AG04450 (cell line): ENCODE measurements at regions of chr12 and their contacts with region 1.

Region 1: GRCh38 chr12:90959538-90960139 is 4.7 kb upstream of the CCER1 start:
- DNase-seq: no peak
- H3K4me3 ChIP-seq: no peak overlapping the region
- H3K27ac ChIP-seq: no peak overlapping the region
- H3K27me3 ChIP-seq: no peaks in the 10 kb centered on the region
- CTCF ChIP-seq: peak; percentile 86

Region 2: DNA sequence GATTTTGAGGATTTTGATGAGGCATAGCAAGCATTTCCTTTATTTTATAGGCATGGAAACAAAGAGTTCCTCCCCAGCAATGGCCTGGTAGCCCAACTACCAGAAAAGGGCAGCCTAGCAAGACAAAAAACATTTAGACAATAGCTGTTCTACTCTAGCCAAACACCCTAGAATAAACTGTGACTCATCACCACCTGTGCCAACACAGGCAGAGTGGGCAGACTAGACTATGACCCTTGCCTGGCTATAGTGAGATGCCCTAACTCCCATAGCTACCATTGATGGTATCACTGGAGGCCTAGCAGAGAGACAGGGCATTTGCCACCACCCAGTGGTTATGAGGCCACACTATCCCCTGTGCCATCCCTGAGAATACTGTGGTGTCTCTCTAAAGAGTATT is 10.8 kb after region 1 on chr12:
- CTCF ChIA-PET with region 1: interaction called, 18 read pairs
- POLR2A ChIA-PET with region 1: no interaction called
- DNase-seq: no peak
- H3K4me3 ChIP-seq: no peak overlapping the region
- H3K27ac ChIP-seq: no peak overlapping the region
- H3K27me3 ChIP-seq: no peaks in the 10 kb centered on the region
- CTCF ChIP-seq: no peak